Activated T-helper 1 cell treated with anti-CD3 and anti-CD28 coated beads, Interleukin-12 subunit alpha, Interleukin-12 subunit beta, Interleukin-2, Interleukin-4 antibody, amounts not matched to agents 30 ng/mL and 10 ng/mL and 1 ng/mL, durations not matched to agents 14 hours and 24 hours and 36 hours (primary cell): ENCODE measurements at regions of chr6 and their contacts with region 1.

Region 1: DNA sequence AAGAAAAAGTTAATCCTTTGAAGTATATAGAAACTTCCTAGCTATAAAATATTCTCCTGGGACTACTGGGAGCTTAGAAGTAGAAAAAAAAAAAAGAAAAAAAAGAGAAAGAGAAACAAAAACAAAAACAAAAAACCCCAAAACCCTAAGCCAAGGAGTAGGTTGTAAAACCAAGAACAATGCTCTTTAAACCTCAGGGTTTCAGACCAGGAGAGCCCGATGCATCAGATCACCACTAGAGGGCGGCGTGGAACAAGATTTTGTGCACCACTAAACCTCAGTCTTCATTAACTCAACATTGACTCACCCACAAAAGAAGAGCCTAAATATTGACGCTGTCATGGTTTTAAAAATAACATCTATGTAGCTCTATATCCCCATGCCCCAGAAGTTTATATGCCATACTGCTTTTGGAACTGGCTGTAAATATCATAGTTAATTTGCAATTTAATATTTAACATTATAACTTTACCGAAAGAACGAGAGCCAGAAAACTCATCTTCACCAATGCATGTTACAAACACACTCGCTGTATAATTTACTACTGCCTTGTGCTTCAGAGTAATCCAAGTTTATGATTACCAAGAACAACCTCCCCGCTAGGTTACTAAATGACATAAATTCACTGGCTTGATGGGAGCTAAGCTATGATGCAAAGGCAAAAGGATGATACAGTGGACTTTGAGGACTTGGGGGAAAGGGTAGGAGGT is 19.2 kb downstream of the MCUR1 start:
- DNase-seq: peak; percentile 75
- H3K4me3 Mint-ChIP-seq: peak overlapping the region; percentile 5
- H3K27ac Mint-ChIP-seq: peak overlapping the region; percentile 40
- H3K4me1 Mint-ChIP-seq: peaks cover 21% of the 10 kb centered on the region
- H3K27me3 Mint-ChIP-seq: no peaks in the 10 kb centered on the region

Region 2: DNA sequence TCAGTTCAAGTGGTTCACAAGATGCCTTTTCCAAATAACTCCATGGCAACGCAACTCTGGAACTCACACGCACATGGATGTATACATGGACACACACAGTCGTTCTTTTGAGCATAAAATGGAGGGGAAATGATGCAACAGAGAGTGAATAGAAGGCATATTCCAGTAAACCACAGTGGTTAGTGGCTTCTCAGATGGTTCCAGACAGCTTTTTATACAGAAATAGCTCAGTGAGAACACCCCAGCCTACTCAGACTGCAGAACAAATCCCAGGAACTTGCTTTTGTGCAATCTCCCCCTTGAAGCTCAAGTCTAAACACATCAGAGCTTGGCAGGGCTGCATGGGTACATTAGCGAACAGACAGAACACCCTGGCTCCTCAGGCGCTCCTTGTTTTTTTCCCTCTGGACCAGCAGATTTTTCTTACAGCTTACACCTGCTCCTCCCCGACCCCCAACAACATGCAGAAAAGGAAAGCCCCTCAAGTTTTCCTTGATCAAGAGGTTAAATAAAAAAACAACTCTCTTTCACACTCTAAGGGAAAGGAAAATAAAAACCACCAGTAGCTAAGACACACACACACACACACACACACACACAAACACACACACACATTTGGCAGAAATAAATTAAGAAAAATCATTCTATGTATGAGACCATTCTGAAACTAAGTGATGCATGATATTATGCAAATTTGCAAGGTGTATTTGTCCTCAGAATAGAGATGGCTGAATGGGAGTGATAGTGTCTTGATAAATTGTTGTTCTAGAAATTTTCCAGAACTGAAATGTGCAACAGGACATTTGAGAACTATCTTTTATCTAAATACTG is 32.4 kb before region 1 on chr6:
- intact Hi-C with region 1: loop called (anchors 1 kb)
- DNase-seq: peak; percentile 34
- H3K4me3 Mint-ChIP-seq: peak overlapping the region; percentile 75
- H3K27ac Mint-ChIP-seq: peak overlapping the region; percentile 92
- H3K4me1 Mint-ChIP-seq: peaks cover 52% of the 10 kb centered on the region
- H3K27me3 Mint-ChIP-seq: peaks cover 2% of the 10 kb centered on the region

Region 3: GRCh38 chr6:13873285-13874190 is 78.3 kb after region 1 on chr6:
- intact Hi-C with region 1: loop called (anchors 2 kb)
- DNase-seq: peak; percentile 50
- H3K4me3 Mint-ChIP-seq: peak overlapping the region; percentile 66
- H3K27ac Mint-ChIP-seq: no peak overlapping the region
- H3K4me1 Mint-ChIP-seq: peaks cover 16% of the 10 kb centered on the region
- H3K27me3 Mint-ChIP-seq: peaks cover 12% of the 10 kb centered on the region

Region 4: GRCh38 chr6:14046476-14047068 is 251.4 kb after region 1 on chr6:
- intact Hi-C with region 1: loop called (anchors 1 kb)
- DNase-seq: peak; percentile 27
- H3K4me3 Mint-ChIP-seq: no peak overlapping the region
- H3K27ac Mint-ChIP-seq: no peak overlapping the region
- H3K4me1 Mint-ChIP-seq: no peaks in the 10 kb centered on the region
- H3K27me3 Mint-ChIP-seq: peaks cover 29% of the 10 kb centered on the region